Activated CD8-positive, alpha-beta T cell treated with anti-CD3 and anti-CD28 coated beads, Interleukin-2, amount 10 ng/mL, durations not matched to agents 7 days and 5 days (primary cell): ENCODE measurements at regions of chr19 and their contacts with region 1.

Region 1: DNA sequence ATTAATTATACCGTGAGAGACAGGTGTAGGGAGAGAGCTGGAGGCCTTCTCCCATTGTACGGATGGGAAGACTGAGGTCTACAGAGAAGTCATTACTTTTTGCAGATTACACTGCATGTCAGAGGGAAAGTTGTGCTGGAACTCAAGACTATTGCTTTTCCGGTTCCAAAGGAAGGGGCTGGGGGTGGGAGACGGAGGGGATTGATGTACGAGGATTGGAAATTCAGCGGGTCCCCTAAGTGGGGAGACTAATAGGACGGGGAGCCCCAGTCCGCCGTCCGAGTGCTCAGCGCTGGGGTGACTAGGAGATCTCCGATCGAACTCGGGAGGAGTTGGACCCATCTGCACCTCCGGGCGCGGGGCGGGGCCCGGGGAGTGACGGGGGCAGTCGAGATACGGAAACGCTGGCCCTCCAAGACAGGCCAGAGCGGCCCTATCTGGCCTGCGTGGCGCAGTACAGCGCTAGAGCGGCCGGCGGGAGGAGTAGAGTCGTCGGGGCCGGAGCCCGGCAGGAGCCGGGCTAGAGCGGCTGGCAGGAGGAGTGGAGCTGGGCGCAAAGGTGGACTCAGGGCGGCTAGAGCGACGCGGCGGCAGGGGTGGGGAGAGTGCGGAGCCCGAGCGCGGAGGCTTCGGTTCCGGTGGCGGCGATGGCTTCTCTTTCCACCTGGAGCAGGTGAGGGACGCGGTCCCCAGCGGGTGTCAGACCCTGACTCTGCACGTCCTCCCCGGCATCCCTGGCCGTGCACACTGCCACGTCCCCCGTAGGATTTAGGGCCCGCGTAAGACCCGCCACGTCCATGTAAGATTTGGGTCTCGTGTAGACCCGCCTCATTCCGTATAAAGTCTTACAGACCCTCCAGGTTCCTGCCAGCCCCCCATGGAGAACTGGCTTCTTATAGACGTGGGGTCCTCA is 1.1 kb downstream of the ARHGEF1 start:
- DNase-seq: peak; percentile 94
- ATAC-seq: peak; percentile 78
- H3K4me3 Mint-ChIP-seq: peak overlapping the region; percentile 80
- H3K27ac Mint-ChIP-seq: peak overlapping the region; percentile 87
- H3K4me1 Mint-ChIP-seq: peaks cover 57% of the 10 kb centered on the region
- H3K27me3 Mint-ChIP-seq: no peaks in the 10 kb centered on the region

Region 2: GRCh38 chr19:41775360-41775695 is 108.7 kb before region 1 on chr19:
- CTCF ChIA-PET with region 1: no interaction called
- POLR2A ChIA-PET with region 1: no interaction called
- DNase-seq: no peak
- ATAC-seq: no peak
- H3K4me3 Mint-ChIP-seq: no peak overlapping the region
- H3K27ac Mint-ChIP-seq: no peak overlapping the region
- H3K4me1 Mint-ChIP-seq: peaks cover 22% of the 10 kb centered on the region
- H3K27me3 Mint-ChIP-seq: peaks cover 67% of the 10 kb centered on the region

Region 3: DNA sequence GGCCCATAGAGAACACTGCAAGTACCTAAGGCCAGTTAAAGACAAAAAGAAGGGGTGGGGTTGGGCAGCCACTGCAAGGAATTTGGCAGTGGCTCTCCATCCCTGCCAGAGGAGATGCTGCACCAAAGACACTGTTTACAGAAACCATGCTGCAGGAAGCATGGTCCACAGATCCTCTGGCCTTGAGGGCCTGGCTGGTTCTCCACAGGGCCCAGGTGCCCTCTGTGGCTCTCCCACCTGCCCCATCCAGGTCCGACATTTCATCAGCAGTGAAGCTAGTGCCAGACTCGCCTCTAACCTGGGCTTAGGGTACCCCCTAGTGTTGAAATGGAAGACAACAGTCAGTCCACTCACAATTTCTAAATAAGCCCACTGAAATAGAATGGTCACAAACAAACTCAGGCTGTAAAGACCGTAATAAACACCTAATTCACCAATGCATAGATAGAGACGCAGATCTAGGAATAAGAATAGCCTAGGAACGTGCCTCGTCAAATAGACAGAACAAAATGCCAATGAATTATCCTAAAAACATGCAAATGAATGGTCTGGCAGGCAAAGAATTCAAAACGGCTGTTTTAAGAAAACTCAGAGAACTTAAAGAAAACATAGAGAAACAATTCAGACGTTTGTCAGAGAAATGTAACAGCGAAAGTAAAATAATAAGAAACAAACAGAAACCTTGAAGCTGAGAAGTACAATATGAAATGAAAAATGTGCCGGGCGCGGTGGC is 62.9 kb before region 1 on chr19:
- CTCF ChIA-PET with region 1: no interaction called
- POLR2A ChIA-PET with region 1: no interaction called
- DNase-seq: peak; percentile 66
- ATAC-seq: peak; percentile 88
- H3K4me3 Mint-ChIP-seq: no peak overlapping the region
- H3K27ac Mint-ChIP-seq: no peak overlapping the region
- H3K4me1 Mint-ChIP-seq: no peaks in the 10 kb centered on the region
- H3K27me3 Mint-ChIP-seq: peaks cover 16% of the 10 kb centered on the region

Region 4: GRCh38 chr19:41859618-41860418 is 24.3 kb before region 1 on chr19 and contains the start of gene RPS19:
- CTCF ChIA-PET with region 1: interaction called, 45 read pairs
- POLR2A ChIA-PET with region 1: interaction called, 192 read pairs
- DNase-seq: peak; percentile 99
- ATAC-seq: peak; percentile 87
- H3K4me3 Mint-ChIP-seq: peak within 1 kb of the TSS; percentile 88
- H3K27ac Mint-ChIP-seq: peak within 1 kb of the TSS; percentile 96
- H3K4me1 Mint-ChIP-seq: peaks cover 44% of the 10 kb centered on the region
- H3K27me3 Mint-ChIP-seq: peaks cover 8% of the 10 kb centered on the region
- total RNA-seq, gene RPS19: 3,024 to 3,056 TPM

Region 5: DNA sequence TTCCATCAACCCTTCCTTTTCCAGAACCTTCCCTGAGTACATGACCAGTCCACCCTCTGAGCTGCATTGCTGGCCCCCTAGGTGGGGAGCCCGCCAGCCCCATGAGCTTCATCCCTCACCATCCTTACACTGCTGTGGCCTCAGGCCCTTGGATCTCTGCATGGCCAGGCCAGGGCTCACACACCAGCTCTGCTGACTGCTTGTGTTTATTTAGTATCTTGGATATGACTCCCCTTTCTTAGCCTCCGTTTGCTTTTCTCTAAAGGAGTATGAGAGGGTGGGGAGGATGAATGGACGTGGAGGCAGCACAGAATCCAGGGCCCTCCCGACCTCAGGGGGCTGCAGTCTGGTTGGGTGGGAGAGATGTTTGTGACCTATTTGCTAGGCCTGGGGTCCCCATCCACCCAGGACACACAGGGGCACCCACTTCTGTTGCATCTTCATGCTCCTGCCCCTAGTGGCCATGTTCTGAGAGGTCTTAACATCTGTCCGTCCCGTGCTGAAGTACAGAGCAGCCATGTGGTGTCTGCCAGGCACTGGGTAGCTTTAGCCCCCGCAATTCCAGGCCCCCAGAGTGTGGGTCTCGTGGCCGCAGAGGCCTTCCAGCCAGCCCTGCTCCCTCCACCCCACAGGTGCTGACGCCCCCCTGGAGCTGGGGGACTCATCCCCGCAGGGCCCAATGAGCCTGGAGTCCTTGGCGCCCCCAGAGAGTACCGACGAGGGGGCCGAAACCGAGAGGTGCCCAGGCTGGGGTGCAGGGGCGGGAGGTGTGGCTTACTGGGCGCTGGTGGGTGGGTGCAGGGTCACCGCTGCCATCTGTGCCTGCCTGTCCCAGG is 11.9 kb after region 1 on chr19:
- CTCF ChIA-PET with region 1: interaction called, 11 read pairs
- POLR2A ChIA-PET with region 1: interaction called, 16 read pairs
- DNase-seq: no peak
- ATAC-seq: peak; percentile 59
- H3K4me3 Mint-ChIP-seq: no peak overlapping the region
- H3K27ac Mint-ChIP-seq: peak overlapping the region; percentile 48
- H3K4me1 Mint-ChIP-seq: peaks cover 56% of the 10 kb centered on the region
- H3K27me3 Mint-ChIP-seq: no peaks in the 10 kb centered on the region

Region 6: GRCh38 chr19:41903193-41903953 is 19.3 kb after region 1 on chr19:
- CTCF ChIA-PET with region 1: interaction called, 6 read pairs
- POLR2A ChIA-PET with region 1: interaction called, 20 read pairs
- DNase-seq: no peak
- ATAC-seq: no peak
- H3K4me3 Mint-ChIP-seq: no peak overlapping the region
- H3K27ac Mint-ChIP-seq: no peak overlapping the region
- H3K4me1 Mint-ChIP-seq: peaks cover 37% of the 10 kb centered on the region
- H3K27me3 Mint-ChIP-seq: no peaks in the 10 kb centered on the region

Region 7: DNA sequence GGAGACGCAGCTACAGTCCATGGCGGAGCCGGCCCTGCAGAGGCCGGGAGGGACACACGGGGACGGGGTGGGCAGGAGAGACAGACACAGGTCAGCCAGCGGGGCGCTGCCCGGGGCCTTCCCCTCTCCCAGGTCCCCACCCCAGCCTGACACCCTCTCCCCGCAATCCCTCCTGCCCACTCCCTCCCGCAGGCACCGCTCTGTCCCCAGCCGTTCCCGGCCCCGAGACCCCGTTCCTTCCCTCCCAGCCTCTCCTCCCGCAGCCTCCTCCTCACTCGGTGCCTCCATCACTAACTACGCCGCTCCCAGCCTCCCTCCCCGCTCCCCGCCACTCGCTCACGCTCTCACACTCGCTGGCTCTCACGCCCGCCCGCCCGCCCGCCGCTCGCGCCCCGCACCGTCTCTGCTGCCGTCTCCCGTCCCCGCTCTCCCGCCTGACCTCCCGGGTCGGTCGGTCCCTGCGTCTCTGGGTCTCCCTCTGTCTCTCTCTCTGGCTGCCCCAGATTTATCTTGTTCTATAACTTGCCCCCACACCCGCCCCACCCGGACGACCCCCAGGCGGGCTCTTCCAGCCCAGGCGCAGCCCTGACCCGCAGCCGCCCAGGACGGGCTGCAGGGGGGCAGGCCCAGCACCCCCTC is 28.9 kb after region 1 on chr19:
- CTCF ChIA-PET with region 1: interaction called, 9 read pairs
- POLR2A ChIA-PET with region 1: interaction called, 12 read pairs
- DNase-seq: peak; percentile 44
- ATAC-seq: peak; percentile 28
- H3K4me3 Mint-ChIP-seq: no peak overlapping the region
- H3K27ac Mint-ChIP-seq: no peak overlapping the region
- H3K4me1 Mint-ChIP-seq: peaks cover 6% of the 10 kb centered on the region
- H3K27me3 Mint-ChIP-seq: peaks cover 24% of the 10 kb centered on the region

Region 8: GRCh38 chr19:41945135-41945766 is 61.2 kb after region 1 on chr19:
- CTCF ChIA-PET with region 1: interaction called, 12 read pairs
- POLR2A ChIA-PET with region 1: interaction called, 36 read pairs
- DNase-seq: peak; percentile 93
- ATAC-seq: peak; percentile 82
- H3K4me3 Mint-ChIP-seq: peak overlapping the region; percentile 34
- H3K27ac Mint-ChIP-seq: peak overlapping the region; percentile 90
- H3K4me1 Mint-ChIP-seq: peaks cover 53% of the 10 kb centered on the region
- H3K27me3 Mint-ChIP-seq: peaks cover 23% of the 10 kb centered on the region